Caco-2 (cell line): ENCODE measurements at regions of chr17 and their contacts with region 1.

Region 1: DNA sequence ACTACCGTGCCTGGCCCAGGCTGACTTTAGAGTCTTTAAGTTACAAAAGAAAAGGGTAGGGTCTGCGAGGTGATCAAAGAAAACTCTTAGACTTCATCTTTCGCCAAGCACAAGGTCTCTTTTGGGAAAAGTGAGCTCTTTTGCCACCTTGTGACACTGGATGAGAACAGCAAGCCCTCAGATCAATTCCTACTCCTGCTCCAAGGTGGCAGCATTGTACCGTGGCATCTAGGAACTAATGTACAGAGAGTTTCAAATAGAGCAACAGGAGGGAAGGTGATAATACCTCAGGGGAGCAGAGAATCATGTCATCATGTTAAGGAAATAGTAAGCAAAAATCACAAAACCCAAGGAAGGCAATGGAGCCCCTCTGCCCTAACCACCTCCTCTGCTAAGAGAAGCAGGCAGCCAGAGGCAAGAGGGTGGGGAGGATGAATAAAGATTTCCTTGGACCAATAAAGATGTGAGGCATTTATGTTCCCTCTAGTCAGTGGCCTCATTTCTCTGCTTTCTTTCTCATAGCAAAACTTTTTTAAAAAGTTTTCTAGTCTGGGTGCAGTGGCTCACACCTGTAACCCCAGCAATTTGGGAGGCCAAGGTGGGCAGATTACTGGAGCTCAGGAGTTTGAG is 2.1 kb upstream of the C17orf78 start:
- DNase-seq: peak; percentile 83 to 85
- H3K4me3 ChIP-seq: no peak overlapping the region
- H3K4me3 Mint-ChIP-seq: no peak overlapping the region
- H3K27ac Mint-ChIP-seq: no peak overlapping the region
- H3K4me1 ChIP-seq: peaks cover 2% of the 10 kb centered on the region; the same call in 1 of the 2 replicates
- H3K4me1 Mint-ChIP-seq: no peaks in the 10 kb centered on the region
- H3K27me3 ChIP-seq: no peaks in the 10 kb centered on the region
- H3K27me3 Mint-ChIP-seq: no peaks in the 10 kb centered on the region
- CTCF ChIP-seq: peak; percentile 99 to 100

Region 2: DNA sequence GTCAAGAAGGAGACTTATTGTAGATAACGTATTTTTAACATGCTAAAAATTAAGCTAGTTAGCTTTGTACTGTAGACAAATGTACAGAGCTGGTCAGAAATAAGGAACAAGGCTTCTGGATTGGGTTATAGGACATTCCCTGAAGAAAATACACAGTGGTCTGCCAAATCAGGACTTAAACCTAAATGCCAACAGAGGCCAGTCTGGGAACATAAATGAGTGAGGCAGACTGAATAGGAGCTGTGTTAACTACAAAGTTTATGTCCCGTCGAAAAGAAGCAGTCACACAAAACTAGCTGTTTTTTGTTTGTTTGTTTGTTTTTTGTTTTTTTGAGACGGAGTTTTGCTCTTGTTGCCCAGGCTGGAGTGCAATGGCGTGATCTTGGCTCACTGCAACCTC is 118.2 kb before region 1 on chr17:
- CTCF ChIA-PET with region 1: interaction called, 10 read pairs
- POLR2A ChIA-PET with region 1: no interaction called
- intact Hi-C with region 1: no loop called
- DNase-seq: no peak
- H3K4me3 ChIP-seq: no peak overlapping the region
- H3K4me3 Mint-ChIP-seq: no peak overlapping the region
- H3K27ac Mint-ChIP-seq: no peak overlapping the region
- H3K4me1 ChIP-seq: no peaks in the 10 kb centered on the region
- H3K4me1 Mint-ChIP-seq: no peaks in the 10 kb centered on the region
- H3K27me3 ChIP-seq: no peaks in the 10 kb centered on the region
- H3K27me3 Mint-ChIP-seq: no peaks in the 10 kb centered on the region
- CTCF ChIP-seq: no peak

Region 3: DNA sequence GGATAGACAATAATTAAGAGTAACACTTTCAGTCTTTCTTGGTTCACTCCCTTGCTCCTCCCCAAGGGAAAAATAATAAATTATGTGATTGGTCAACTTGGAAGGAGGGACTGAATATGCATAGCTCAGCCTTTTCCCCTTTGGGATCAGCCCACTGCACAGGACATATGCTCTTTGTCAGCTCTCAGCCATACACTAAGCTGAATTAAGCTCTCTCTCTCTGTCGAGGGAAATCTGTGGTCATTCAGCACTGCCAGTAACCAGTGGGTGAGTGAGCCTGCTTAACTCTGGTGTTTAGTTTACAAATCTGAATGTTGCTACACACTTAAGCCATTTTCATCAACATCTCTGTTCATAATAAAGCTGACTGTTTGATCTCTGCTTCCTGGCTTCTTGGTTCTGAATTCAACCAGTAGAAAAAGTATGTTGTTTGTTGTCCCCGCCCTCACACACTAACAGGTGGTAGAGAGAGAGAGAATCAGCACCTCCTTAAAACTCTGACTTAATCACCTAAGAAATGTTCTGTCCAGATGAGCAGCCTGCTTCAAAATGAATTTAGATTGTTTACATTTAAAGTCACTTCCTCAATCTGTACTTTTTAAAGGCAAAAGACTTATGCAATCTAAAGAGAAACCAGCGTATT is 100.1 kb before region 1 on chr17:
- CTCF ChIA-PET with region 1: interaction called, 3 read pairs
- POLR2A ChIA-PET with region 1: no interaction called
- intact Hi-C with region 1: loop called (anchors 10 kb)
- DNase-seq: no peak
- H3K4me3 ChIP-seq: no peak overlapping the region
- H3K4me3 Mint-ChIP-seq: no peak overlapping the region
- H3K27ac Mint-ChIP-seq: no peak overlapping the region
- H3K4me1 ChIP-seq: peaks cover 3% of the 10 kb centered on the region; the same call in 1 of the 2 replicates
- H3K4me1 Mint-ChIP-seq: peaks cover 6% of the 10 kb centered on the region
- H3K27me3 ChIP-seq: no peaks in the 10 kb centered on the region
- H3K27me3 Mint-ChIP-seq: no peaks in the 10 kb centered on the region
- CTCF ChIP-seq: no peak

Region 4: DNA sequence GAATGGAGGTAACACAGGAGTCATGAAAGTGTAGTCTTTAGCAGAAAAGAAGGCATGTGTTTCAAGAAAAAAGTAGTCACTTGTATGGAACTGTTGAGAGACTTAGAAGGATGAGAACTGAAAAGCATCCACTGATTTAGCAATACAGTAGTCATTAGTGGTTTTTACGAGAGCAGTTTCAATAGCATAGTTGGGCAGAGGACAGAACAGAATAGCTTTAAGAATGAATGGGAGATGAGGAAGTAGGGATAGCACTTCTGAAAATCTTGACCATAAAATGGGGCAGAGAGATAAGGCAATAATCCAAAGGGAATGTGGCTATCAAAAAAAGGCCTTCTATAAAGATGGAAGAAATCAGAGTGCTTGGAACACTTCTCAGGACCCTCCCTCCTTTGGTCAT is 62.7 kb before region 1 on chr17:
- CTCF ChIA-PET with region 1: no interaction called
- POLR2A ChIA-PET with region 1: no interaction called
- intact Hi-C with region 1: no loop called
- DNase-seq: no peak
- H3K4me3 ChIP-seq: no peak overlapping the region
- H3K4me3 Mint-ChIP-seq: no peak overlapping the region
- H3K27ac Mint-ChIP-seq: no peak overlapping the region
- H3K4me1 ChIP-seq: no peaks in the 10 kb centered on the region
- H3K4me1 Mint-ChIP-seq: peaks cover 20% of the 10 kb centered on the region
- H3K27me3 ChIP-seq: no peaks in the 10 kb centered on the region
- H3K27me3 Mint-ChIP-seq: no peaks in the 10 kb centered on the region
- CTCF ChIP-seq: no peak

Region 5: GRCh38 chr17:37358830-37359681 is 14.6 kb before region 1 on chr17:
- CTCF ChIA-PET with region 1: interaction called, 40 read pairs
- POLR2A ChIA-PET with region 1: interaction called, 13 read pairs
- intact Hi-C with region 1: no loop called
- DNase-seq: peak; percentile 98 to 100
- H3K4me3 ChIP-seq: peak overlapping the region; percentile 84
- H3K4me3 Mint-ChIP-seq: peak overlapping the region; percentile 98
- H3K27ac Mint-ChIP-seq: peak overlapping the region; percentile 90
- H3K4me1 ChIP-seq: peaks cover 25% of the 10 kb centered on the region
- H3K4me1 Mint-ChIP-seq: peaks cover 22% of the 10 kb centered on the region
- H3K27me3 ChIP-seq: no peaks in the 10 kb centered on the region
- H3K27me3 Mint-ChIP-seq: no peaks in the 10 kb centered on the region
- CTCF ChIP-seq: peak; percentile 22 to 60

Region 6: DNA sequence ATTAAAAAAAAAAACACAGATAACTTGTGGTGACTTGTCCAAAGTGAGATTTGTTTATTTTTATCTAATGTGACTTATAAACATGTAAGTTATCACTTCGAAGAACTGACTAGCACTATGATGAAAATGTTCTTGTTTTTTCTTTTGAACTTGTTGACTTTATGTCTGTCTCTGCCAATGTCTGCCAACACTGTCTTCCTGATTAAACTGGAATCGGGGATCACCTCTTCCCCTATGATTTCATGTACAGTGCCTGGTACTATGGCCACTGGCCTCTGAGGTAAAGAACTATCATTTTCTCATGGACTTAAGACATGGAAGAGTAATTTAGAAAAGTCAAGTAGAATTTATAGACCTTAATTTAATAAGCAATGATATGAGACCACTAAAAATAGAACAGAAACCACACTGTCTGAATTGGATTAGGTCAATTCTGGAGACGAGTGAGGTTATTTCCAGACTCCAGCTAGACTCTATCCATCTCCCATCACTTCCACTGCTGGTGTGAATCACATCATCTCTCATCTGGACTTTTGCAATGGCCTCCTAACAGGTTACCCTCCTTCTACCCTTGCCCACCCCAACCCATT is 11.0 kb after region 1 on chr17:
- CTCF ChIA-PET with region 1: interaction called, 21 read pairs
- POLR2A ChIA-PET with region 1: no interaction called
- intact Hi-C with region 1: no loop called
- DNase-seq: no peak
- H3K4me3 ChIP-seq: no peak overlapping the region
- H3K4me3 Mint-ChIP-seq: no peak overlapping the region
- H3K27ac Mint-ChIP-seq: no peak overlapping the region
- H3K4me1 ChIP-seq: peaks cover 5% of the 10 kb centered on the region; the same call in 1 of the 2 replicates
- H3K4me1 Mint-ChIP-seq: peaks cover 6% of the 10 kb centered on the region
- H3K27me3 ChIP-seq: no peaks in the 10 kb centered on the region
- H3K27me3 Mint-ChIP-seq: no peaks in the 10 kb centered on the region
- CTCF ChIP-seq: no peak

Region 7: DNA sequence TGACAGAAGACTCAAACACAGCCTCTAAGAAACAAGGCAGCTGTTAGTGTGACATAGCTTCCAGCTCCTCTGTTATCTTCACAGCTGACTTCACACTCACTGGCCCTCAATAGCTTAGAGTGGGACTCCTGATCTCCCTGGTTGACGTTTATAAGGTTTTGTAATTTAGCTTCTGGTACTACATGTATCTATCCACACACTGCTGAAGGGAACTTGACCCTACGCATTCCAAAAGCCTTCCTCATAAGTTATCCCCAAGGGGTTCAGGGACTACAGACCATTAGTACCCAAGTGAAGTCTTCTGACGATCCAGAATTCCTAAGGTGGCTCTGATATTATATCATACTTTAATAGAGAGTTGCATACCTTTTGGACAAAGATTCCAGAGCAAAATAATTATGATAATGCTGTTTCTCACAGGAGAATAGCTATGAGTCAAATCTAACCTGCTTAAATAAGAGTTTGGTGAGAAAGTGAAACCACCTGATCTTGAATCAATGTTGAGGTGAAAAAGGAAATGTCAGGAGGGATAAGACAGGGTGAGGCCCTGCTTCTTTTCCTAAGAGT is 18.5 kb after region 1 on chr17:
- CTCF ChIA-PET with region 1: interaction called, 29 read pairs
- POLR2A ChIA-PET with region 1: no interaction called
- intact Hi-C with region 1: loop called (anchors 1 kb)
- DNase-seq: no peak
- H3K4me3 ChIP-seq: no peak overlapping the region
- H3K4me3 Mint-ChIP-seq: no peak overlapping the region
- H3K27ac Mint-ChIP-seq: no peak overlapping the region
- H3K4me1 ChIP-seq: peaks cover 4% of the 10 kb centered on the region; the same call in 1 of the 2 replicates
- H3K4me1 Mint-ChIP-seq: no peaks in the 10 kb centered on the region
- H3K27me3 ChIP-seq: no peaks in the 10 kb centered on the region
- H3K27me3 Mint-ChIP-seq: no peaks in the 10 kb centered on the region
- CTCF ChIP-seq: no peak